Pancreas (tissue), 10 donors: ENCODE measurements at regions of chr6 and their contacts with region 1.

Region 1: DNA sequence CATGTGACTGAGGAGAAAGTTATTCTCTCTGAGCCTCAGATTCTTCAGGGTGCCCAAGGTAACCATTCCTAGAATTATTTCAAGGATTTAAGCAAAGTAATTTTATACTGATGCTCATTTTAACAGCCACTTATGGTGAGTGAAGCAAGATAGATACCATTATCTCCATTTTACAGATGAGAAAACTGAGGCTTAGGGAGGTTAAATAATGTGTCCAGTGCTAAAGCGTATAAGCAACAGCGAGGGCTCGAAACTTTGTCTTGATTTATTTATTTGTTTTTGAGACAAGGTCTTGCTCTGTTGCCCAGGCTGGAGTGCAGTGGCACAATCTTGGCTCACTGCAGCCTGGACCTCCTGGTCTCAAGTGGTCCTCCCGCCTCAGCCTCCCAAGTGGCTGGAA is 53.6 kb downstream of the FOXF2 start:
- DNase-seq: no peak
- ATAC-seq: no peak
- H3K4me3 ChIP-seq: no peak overlapping the region
- H3K27ac ChIP-seq: no peak overlapping the region
- H3K4me1 ChIP-seq: no peaks in the 10 kb centered on the region
- H3K27me3 ChIP-seq: no peaks in the 10 kb centered on the region
- CTCF ChIP-seq: no peak

Region 2: DNA sequence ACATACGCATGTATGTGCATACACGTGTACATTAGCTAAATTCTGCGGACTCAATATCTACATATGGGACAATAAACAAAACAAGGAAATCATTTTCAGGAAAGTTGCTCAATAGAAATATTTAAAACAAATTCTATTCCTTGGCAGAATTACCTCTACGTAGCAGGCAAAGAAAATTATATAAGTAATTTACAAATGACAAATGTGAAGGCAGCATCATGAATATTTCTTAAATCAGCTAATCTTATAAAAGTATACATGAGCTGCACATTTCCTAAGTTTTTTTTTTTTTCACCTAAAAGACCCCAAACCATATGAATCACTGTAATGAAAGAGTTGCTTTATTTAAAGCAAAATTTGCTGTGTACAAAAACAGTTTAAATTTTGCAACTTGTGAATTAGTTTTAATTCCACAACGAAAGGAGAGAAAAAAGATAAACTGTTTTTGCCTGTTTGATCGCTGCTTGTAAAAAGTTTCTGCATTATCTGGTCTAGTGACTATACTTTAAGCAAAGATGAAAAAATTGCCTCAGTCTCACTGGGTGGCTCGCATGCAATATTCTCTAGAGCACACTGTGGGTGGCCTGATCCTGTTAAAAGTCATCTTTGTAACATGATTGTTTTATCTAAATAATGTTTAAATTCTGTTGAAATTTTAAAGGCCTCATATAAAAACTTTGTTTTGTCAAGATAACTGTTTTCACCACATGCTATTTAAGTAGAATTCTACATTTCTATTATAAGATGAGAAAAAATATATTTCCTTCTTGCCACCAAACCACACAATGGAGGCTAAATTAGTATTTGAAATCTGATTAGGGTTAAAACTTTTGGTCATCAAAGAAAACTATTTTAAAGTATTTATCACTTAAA is 843.1 kb before region 1 on chr6:
- intact Hi-C with region 1: loop called in 1 of 3 experiments (anchors 5 kb)
- DNase-seq: no peak
- ATAC-seq: no peak
- H3K4me3 ChIP-seq: no peak overlapping the region
- H3K27ac ChIP-seq: no peak overlapping the region
- H3K4me1 ChIP-seq: no peaks in the 10 kb centered on the region
- H3K27me3 ChIP-seq: no peaks in the 10 kb centered on the region
- CTCF ChIP-seq: no peak